Naive thymus-derived CD4-positive, alpha-beta T cell (primary cell): ENCODE measurements at regions of chr21 and their contacts with region 1.

Region 1: GRCh38 chr21:42467140-42467983 is 28.7 kb downstream of the RSPH1 start:
- DNase-seq: no peak
- ATAC-seq: no peak
- H3K4me3 ChIP-seq: no peak overlapping the region
- H3K4me3 Mint-ChIP-seq: no peak overlapping the region
- H3K27ac ChIP-seq: no peak overlapping the region
- H3K27ac Mint-ChIP-seq: peak overlapping the region in 3 of 9 donors; percentile 44 to 75 (median 48)
- H3K4me1 ChIP-seq: peaks cover 18 to 31% of the 10 kb centered on the region in 2 donors
- H3K4me1 Mint-ChIP-seq: peaks cover 31 to 45% (median 40%) of the 10 kb centered on the region in 7 donors
- H3K27me3 ChIP-seq: no peaks in the 10 kb centered on the region
- H3K27me3 Mint-ChIP-seq: peaks cover 0 to 14% (median 0%) of the 10 kb centered on the region in 5 donors

Region 2: DNA sequence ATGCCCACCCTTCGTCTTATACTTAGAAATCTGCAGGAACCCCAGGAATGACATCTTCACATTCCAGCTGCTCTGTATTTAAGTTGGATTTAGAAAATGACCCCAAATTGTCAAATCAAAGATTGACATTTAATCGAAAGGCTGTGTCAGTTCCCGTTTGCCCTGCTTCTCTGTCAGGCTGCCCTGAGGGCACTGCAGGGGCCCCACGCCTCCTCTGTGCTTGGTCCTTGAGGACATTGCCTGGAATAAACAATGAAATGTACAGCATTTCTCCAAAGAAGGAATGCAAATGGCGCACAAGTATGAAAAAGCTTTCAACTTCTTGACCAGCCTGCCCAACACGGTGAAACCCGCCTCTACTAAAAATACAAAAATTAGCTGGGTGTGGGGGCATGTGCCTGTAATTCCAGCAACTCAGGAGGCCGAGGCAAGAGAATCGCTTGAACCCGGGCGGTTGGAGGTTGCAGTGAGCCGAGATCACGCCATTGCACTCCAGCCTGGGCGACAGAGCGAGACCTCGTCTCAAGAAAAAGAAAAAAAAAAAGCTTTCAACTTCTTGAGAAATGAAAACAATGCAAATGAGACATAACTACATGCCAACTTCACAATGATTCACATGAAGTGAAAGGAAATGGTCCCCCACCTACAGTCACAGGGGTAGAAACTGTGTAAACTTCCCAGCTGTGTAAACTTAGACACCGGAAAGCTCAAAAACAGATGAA is 74.5 kb before region 1 on chr21:
- CTCF ChIA-PET with region 1: no interaction called
- POLR2A ChIA-PET with region 1: no interaction called
- intact Hi-C with region 1: loop called in 1 of 2 experiments (anchors 5 kb)
- DNase-seq: peak in 7 of 9 donors; percentile 29 to 64 (median 54)
- ATAC-seq: peak; percentile 82
- H3K4me3 ChIP-seq: peak overlapping the region; percentile 5
- H3K4me3 Mint-ChIP-seq: peak overlapping the region; percentile 22 to 75 (median 64)
- H3K27ac ChIP-seq: peak overlapping the region; percentile 46
- H3K27ac Mint-ChIP-seq: peak overlapping the region; percentile 5 to 91 (median 83)
- H3K4me1 ChIP-seq: peaks cover 13 to 34% of the 10 kb centered on the region in 2 donors
- H3K4me1 Mint-ChIP-seq: peaks cover 23 to 84% (median 63%) of the 10 kb centered on the region in 7 donors
- H3K27me3 ChIP-seq: no peaks in the 10 kb centered on the region
- H3K27me3 Mint-ChIP-seq: peaks cover 0 to 4% (median 0%) of the 10 kb centered on the region in 5 donors

Region 3: DNA sequence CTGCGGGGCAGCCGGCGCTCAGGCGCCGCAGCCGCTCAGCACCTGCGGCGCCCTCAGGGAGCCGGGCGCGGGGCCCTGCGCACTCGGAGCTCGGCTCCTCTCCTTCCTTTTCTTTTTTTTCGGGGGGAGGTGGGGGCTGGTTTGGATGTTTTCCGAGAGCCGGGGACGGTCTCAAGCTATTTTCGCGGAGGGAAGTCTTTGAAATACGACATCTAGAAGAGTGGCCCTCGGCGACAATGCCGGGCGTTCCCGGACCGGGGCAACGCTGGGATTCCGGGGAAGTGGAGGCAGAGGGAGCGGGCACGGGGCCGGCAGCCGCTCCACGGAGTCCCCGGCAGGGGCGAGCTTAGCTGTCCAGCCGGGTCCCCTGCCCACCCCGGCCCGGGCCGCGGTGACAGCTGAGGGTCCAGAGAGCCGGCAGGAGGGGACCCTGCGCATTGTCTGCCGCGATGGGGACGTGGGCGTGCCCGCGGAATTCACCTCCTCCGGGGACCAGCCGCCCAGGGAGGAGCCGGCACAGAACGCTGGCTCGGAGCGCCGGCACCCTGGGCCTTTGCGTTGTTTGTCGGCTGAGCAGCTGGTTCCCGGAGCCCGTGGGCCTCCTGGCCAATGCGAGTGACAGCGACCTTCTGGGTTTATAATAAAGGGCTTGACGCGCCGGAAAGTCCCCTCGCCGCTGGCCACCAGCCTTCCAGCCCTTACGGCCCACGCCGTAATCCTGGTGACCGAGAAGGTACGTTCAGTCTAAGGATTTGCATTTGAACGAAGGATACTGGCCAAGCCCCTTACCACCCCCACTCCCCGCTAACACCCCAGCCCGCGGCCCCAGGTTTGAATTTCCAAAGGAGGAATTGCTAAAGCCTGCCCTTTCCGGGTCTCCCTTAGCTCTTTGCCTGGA is 46.9 kb after region 1 on chr21:
- CTCF ChIA-PET with region 1: no interaction called
- POLR2A ChIA-PET with region 1: interaction called, 4 read pairs
- intact Hi-C with region 1: loop called in 1 of 2 experiments (anchors 2 kb)
- DNase-seq: peak in 8 of 9 donors; percentile 42 to 76 (median 54)
- ATAC-seq: peak; percentile 83
- H3K4me3 ChIP-seq: peak overlapping the region; percentile 82
- H3K4me3 Mint-ChIP-seq: peak overlapping the region; percentile 76 to 97 (median 89)
- H3K27ac ChIP-seq: peak overlapping the region; percentile 87
- H3K27ac Mint-ChIP-seq: peak overlapping the region; percentile 58 to 88 (median 84)
- H3K4me1 ChIP-seq: peaks cover 18 to 20% of the 10 kb centered on the region in 2 donors
- H3K4me1 Mint-ChIP-seq: peaks cover 22 to 45% (median 38%) of the 10 kb centered on the region in 7 donors
- H3K27me3 ChIP-seq: no peaks in the 10 kb centered on the region
- H3K27me3 Mint-ChIP-seq: peaks cover 0 to 19% (median 0%) of the 10 kb centered on the region in 5 donors

Region 4: DNA sequence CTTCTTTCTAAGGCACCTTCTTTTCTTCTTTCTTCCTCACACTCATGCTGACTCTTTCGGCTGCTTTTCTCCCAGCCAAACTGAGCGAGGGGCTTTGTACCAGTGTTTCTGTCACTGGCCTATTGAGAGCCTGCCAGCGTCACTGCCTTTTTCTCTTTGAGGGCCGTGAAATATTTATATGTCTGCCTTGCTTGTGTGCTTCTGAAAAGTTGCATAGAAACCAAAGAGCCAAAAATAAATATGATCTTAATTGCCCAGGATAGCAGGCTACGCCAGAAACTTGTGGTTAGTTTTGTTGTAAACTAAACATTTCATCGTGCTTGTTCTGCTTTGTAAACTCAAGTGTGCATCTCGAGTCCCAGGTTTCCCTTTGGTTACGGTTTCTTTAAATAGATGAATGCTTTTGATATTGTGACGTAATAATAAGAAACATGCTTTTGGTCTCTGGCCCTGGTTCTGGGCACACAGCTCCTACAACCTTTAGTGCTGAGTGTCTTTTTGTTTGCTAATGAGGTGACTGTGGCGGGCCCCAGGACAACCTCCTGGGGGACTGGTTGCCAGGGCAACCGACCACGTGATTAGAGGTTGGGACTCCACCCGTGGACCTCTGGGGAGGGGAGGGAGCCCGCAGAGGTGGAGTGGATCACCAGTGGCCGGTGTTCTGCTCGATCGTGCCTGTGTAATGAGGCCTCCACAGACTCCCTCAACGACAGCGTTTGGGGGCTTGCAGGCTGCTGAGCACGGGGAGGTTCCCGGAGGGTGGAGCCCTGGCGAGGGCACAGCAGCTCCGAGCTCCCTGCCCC is 57.2 kb after region 1 on chr21:
- CTCF ChIA-PET with region 1: no interaction called
- POLR2A ChIA-PET with region 1: no interaction called
- intact Hi-C with region 1: loop called in 1 of 2 experiments (anchors 5 kb)
- DNase-seq: peak in 3 of 9 donors; percentile 10 to 25 (median 20)
- ATAC-seq: peak; percentile 60
- H3K4me3 ChIP-seq: no peak overlapping the region
- H3K4me3 Mint-ChIP-seq: peak overlapping the region in 7 of 10 donors; percentile 20 to 52 (median 43)
- H3K27ac ChIP-seq: no peak overlapping the region
- H3K27ac Mint-ChIP-seq: peak overlapping the region in 8 of 9 donors; percentile 6 to 88 (median 56)
- H3K4me1 ChIP-seq: peaks cover 16 to 30% of the 10 kb centered on the region in 2 donors
- H3K4me1 Mint-ChIP-seq: peaks cover 39 to 64% (median 54%) of the 10 kb centered on the region in 7 donors
- H3K27me3 ChIP-seq: no peaks in the 10 kb centered on the region
- H3K27me3 Mint-ChIP-seq: no peaks in the 10 kb centered on the region

Region 5: DNA sequence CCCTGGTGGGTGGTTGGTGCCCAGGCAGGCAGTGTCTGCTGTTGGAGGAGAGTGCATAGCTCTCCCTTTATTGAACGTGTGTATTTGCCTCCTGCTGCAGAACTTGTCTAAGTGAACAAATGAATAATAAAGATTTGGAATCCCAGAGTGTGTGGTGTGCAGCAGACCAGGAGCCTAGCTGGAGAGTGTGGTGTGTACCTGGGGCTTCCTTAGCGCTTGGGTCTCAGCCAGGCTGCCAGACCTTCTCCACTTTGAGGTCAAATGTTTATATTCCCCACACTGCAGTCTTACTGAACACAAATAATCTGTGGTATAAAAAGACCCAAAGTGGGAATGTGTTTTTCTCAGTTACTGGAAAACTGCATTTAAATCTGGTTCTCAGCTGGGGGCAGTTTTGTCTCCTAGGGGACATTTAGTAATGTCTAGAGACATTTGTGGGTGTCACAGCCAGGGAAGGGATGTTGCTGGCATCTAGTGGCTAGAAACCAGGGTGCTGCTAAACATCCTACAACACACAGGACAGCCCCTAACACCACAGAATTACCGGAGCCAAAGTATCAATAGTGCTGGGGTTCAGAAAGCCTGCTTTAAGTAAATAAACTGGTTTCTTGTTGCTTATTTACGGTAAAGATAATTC is 69.9 kb after region 1 on chr21:
- CTCF ChIA-PET with region 1: no interaction called
- POLR2A ChIA-PET with region 1: interaction called, 3 read pairs
- intact Hi-C with region 1: loop called (anchors 1 to 5 kb)
- DNase-seq: peak in 2 of 9 donors; percentile 18 to 42
- ATAC-seq: no peak
- H3K4me3 ChIP-seq: no peak overlapping the region
- H3K4me3 Mint-ChIP-seq: no peak overlapping the region
- H3K27ac ChIP-seq: no peak overlapping the region
- H3K27ac Mint-ChIP-seq: peak overlapping the region in 1 of 9 donors; percentile 23
- H3K4me1 ChIP-seq: peaks cover 0 to 5% of the 10 kb centered on the region in 2 donors
- H3K4me1 Mint-ChIP-seq: peaks cover 5 to 18% (median 13%) of the 10 kb centered on the region in 7 donors
- H3K27me3 ChIP-seq: no peaks in the 10 kb centered on the region
- H3K27me3 Mint-ChIP-seq: no peaks in the 10 kb centered on the region

Region 6: GRCh38 chr21:42652527-42653230 is 185.3 kb after region 1 on chr21:
- CTCF ChIA-PET with region 1: no interaction called
- POLR2A ChIA-PET with region 1: no interaction called
- intact Hi-C with region 1: no loop called
- DNase-seq: no peak
- ATAC-seq: no peak
- H3K4me3 ChIP-seq: no peak overlapping the region
- H3K4me3 Mint-ChIP-seq: peak overlapping the region; percentile 68 to 88 (median 84)
- H3K27ac ChIP-seq: no peak overlapping the region
- H3K27ac Mint-ChIP-seq: peak overlapping the region in 8 of 9 donors; percentile 1 to 86 (median 68)
- H3K4me1 ChIP-seq: peaks cover 0 to 15% of the 10 kb centered on the region in 2 donors
- H3K4me1 Mint-ChIP-seq: peaks cover 17 to 29% (median 24%) of the 10 kb centered on the region in 7 donors
- H3K27me3 ChIP-seq: peaks cover 0 to 4% of the 10 kb centered on the region in 2 donors
- H3K27me3 Mint-ChIP-seq: peaks cover 0 to 50% (median 0%) of the 10 kb centered on the region in 5 donors

Region 7: DNA sequence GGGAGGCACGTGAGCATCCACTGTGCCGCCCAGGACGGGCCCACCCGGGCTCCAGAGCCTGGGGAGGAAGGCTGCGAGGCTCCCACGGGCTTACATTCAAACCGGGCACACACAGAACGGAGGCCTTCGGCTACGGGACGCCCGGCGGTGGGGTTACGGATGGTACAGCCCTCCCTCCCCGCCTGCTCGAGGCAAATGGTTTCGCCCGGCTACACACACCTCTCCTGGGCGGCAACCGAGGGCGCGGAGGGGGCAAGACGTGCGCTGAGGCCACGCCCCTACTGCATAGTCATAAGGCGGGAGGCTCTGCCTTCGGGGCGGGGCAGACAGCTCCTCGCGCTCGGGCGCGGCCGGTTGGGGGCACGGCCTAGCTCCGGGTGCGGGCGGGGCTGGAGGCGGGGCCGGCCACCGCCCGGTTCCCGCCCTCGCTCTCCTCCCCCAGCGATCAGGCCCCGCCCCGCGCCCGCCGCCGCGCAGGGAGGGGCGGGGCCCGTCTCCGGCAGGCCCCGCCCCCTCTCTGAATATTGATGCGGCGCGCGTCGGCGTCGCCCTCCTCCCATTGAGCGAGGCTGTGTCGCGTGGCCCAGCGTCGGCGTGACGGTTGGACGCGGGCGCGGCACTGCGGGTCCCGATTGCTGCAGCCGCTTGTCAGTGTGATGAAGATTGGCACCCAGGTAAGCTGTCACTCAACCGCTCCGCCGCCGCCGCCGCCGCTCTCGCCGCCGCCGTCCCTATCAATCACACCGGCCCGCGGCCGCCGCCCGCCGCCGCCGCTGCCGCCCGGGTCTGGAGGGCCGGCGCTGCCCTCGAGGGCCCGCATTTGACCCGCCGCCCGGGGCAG is 506.8 kb after region 1 on chr21 and contains the start of gene PKNOX1:
- CTCF ChIA-PET with region 1: no interaction called
- POLR2A ChIA-PET with region 1: no interaction called
- intact Hi-C with region 1: no loop called
- DNase-seq: peak; percentile 98 to 100 (median 99)
- ATAC-seq: peak; percentile 91
- H3K4me3 ChIP-seq: peak within 1 kb of the TSS; percentile 85
- H3K4me3 Mint-ChIP-seq: peak within 1 kb of the TSS; percentile 78 to 93 (median 88)
- H3K27ac ChIP-seq: peak within 1 kb of the TSS; percentile 94
- H3K27ac Mint-ChIP-seq: peak within 1 kb of the TSS; percentile 78 to 95 (median 93)
- H3K4me1 ChIP-seq: peaks cover 7 to 11% of the 10 kb centered on the region in 2 donors
- H3K4me1 Mint-ChIP-seq: peaks cover 0 to 36% (median 29%) of the 10 kb centered on the region in 7 donors
- H3K27me3 ChIP-seq: no peaks in the 10 kb centered on the region
- H3K27me3 Mint-ChIP-seq: no peaks in the 10 kb centered on the region
- total RNA-seq, gene PKNOX1: 14.7 to 24.7 (median 20.8) TPM

Region 8: DNA sequence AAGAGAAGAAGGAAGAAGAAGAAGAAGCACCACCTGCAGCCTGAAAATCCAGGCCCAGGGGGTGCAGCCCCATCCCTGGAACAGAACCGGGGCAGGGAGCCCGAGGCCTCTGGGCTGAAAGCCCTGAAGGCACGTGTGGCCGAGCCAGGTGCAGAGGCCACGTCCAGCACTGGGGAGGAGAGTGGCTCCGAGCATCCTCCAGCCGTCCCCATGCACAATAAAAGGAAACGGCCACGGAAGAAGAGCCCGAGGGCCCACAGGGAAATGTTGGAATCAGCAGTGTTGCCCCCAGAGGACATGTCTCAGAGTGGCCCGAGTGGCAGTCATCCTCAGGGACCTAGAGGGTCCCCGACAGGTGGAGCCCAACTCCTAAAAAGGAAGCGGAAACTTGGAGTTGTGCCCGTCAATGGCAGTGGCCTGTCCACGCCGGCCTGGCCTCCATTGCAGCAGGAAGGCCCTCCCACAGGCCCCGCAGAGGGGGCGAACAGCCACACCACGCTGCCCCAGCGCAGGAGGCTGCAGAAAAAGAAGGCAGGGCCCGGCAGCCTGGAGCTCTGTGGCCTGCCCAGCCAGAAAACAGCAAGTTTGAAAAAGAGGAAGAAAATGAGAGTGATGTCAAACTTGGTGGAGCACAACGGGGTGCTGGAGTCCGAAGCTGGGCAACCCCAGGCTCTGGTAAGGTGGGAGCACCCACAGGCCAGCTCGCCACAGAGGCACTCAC is 1220.4 kb after region 1 on chr21:
- CTCF ChIA-PET with region 1: no interaction called
- POLR2A ChIA-PET with region 1: no interaction called
- intact Hi-C with region 1: no loop called
- DNase-seq: no peak
- ATAC-seq: no peak
- H3K4me3 ChIP-seq: no peak overlapping the region
- H3K4me3 Mint-ChIP-seq: no peak overlapping the region
- H3K27ac ChIP-seq: no peak overlapping the region
- H3K27ac Mint-ChIP-seq: peak overlapping the region in 3 of 9 donors; percentile 28 to 54 (median 39)
- H3K4me1 ChIP-seq: no peaks in the 10 kb centered on the region
- H3K4me1 Mint-ChIP-seq: peaks cover 0 to 17% (median 0%) of the 10 kb centered on the region in 7 donors
- H3K27me3 ChIP-seq: no peaks in the 10 kb centered on the region
- H3K27me3 Mint-ChIP-seq: no peaks in the 10 kb centered on the region